ENCODE measurements at regions of chr19 and their contacts with region 1.

Region 1: GRCh38 chr19:17703824-17704463 is 15.3 kb upstream of the MAP1S start:
- DNase-seq: peak; percentile 82
- H3K4me3 Mint-ChIP-seq: no peak overlapping the region
- H3K27ac Mint-ChIP-seq: no peak overlapping the region
- H3K4me1 Mint-ChIP-seq: no peaks in the 10 kb centered on the region
- H3K27me3 Mint-ChIP-seq: peaks cover 2% of the 10 kb centered on the region

Region 2: DNA sequence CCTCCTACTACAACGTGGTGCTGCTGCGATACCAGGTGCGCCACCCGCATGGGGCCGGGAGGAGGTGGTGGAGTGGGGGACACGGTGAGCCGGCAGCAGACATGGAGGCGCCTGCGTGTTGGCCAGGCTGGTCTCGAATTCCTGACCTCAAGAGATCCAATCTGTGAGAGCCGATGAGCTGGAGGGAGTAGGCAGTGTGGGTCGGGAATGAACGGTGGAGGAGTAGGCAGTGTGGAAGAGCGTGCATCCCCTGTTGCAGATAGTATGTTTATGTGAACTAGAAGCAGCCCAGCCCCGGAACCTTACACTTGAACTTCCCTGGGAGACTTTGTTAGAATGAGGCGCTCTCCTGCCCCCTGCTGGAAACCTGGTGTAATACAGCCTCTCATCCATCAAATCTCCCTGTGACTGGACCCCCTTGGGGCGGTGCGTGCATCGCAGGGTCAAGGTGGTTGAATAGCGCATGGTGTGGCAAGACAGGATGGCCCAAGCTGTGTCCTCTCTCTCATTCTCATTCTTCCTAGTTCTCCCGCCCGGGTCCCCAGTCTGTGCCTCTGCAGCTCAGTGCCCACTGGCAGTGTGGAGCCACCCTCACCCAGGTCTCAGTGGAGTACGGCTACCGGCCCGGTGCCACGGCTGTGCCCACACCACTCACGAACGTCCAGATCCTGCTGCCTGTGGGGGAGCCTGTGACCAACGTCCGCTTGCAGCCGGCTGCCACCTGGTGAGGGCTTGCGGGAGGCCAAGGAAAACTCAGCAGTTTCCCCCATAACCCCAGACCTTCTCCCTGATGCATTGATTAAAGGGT is 80.5 kb after region 1 on chr19:
- CTCF ChIA-PET with region 1: interaction called, 18 read pairs
- intact Hi-C with region 1: loop called (anchors 2 kb)
- DNase-seq: peak; percentile 88
- H3K4me3 Mint-ChIP-seq: no peak overlapping the region
- H3K27ac Mint-ChIP-seq: no peak overlapping the region
- H3K4me1 Mint-ChIP-seq: peaks cover 12% of the 10 kb centered on the region
- H3K27me3 Mint-ChIP-seq: no peaks in the 10 kb centered on the region

Measured in activated naive CD4-positive, alpha-beta T cell treated with anti-CD3 and anti-CD28 coated beads for 36 hours (primary cell).